Mammary epithelial cell (primary cell): ENCODE measurements at regions of chr15 and their contacts with region 1.

Region 1: DNA sequence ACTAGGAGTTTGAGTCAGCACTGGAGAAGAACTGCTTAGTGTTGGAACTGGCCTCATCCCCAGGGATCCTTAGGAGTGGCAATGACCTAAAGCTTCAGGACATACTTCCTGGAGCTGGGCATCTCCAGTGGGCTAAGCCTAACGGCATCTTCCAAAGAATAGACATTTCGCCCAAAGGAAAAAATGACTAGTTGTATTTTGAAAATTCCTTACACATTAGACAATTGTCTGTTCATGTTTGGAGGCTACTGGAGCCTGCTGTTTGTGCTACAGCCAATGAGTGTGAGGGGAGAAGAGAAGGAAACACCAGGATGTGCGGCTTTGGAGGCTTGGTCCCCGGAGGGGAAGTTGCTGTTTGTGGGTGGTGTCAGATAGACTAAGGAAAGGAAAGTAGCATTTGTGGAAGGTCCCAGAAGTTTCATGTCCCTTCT is 77.6 kb downstream of the POLR2M start:
- DNase-seq: peak; percentile 83
- H3K4me3 ChIP-seq: no peak overlapping the region
- H3K27ac ChIP-seq: peak overlapping the region; percentile 65
- H3K4me1 ChIP-seq: peaks cover 24% of the 10 kb centered on the region
- H3K27me3 ChIP-seq: no peaks in the 10 kb centered on the region
- CTCF ChIP-seq: no peak

Region 2: GRCh38 chr15:58167095-58167691 is 383.1 kb after region 1 on chr15:
- CTCF ChIA-PET with region 1: interaction called, 10 read pairs
- dilution Hi-C with region 1: no loop called
- in situ Hi-C with region 1: no loop called
- intact Hi-C with region 1: no loop called
- DNase-seq: no peak
- H3K4me3 ChIP-seq: no peak overlapping the region
- H3K27ac ChIP-seq: no peak overlapping the region
- H3K4me1 ChIP-seq: no peaks in the 10 kb centered on the region
- H3K27me3 ChIP-seq: no peaks in the 10 kb centered on the region
- CTCF ChIP-seq: no peak